Activated T-helper 1 cell treated with anti-CD3 and anti-CD28 coated beads, Interleukin-12 subunit alpha, Interleukin-12 subunit beta, Interleukin-2, Interleukin-4 antibody, amounts not matched to agents 30 ng/mL and 10 ng/mL and 1 ng/mL, durations not matched to agents 14 hours and 24 hours and 36 hours (primary cell): ENCODE measurements at regions of chr1 and their contacts with region 1.

Region 1: DNA sequence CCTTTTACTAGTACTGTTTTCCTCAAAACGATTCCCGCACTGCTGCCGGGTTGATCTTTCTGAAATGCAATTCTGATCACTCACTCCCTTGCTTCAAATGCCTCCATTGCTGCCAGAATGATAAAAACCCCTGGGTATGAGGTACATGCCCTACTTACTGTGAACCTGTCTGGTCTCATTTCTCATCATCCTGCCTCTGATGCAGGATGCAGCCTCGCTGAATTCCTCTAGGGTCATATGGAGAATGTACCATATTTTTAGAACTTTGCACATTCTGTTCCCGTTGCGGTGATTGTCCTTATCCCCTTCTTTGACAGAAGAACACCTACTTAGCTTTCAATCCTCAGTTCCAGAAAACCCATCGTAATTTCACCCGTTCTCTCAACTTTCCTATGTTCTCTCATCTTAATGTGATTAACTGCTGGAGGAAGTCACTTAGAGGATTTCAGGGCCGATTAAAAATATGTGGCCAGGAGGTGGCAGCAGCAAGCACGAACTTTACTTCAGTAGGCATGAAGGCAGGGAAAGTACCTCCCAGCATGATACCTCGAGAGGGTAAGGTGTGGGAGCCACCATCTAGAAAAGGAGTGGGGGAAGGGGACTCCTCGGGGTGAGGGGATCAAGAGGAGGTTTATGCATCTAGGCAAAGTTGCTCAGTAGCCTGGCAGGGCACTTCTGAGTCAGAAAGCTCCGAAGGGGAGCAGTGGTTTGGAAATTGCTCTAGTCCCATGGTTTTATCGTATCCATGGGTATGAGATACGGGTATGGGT is 361.5 kb upstream of the ZP4 start:
- DNase-seq: no peak
- H3K4me3 Mint-ChIP-seq: no peak overlapping the region
- H3K27ac Mint-ChIP-seq: no peak overlapping the region
- H3K4me1 Mint-ChIP-seq: no peaks in the 10 kb centered on the region
- H3K27me3 Mint-ChIP-seq: no peaks in the 10 kb centered on the region

Region 2: GRCh38 chr1:238457610-238458009 is 205.4 kb after region 1 on chr1:
- intact Hi-C with region 1: no loop called
- DNase-seq: no peak
- H3K4me3 Mint-ChIP-seq: no peak overlapping the region
- H3K27ac Mint-ChIP-seq: no peak overlapping the region
- H3K4me1 Mint-ChIP-seq: no peaks in the 10 kb centered on the region
- H3K27me3 Mint-ChIP-seq: no peaks in the 10 kb centered on the region

Region 3: DNA sequence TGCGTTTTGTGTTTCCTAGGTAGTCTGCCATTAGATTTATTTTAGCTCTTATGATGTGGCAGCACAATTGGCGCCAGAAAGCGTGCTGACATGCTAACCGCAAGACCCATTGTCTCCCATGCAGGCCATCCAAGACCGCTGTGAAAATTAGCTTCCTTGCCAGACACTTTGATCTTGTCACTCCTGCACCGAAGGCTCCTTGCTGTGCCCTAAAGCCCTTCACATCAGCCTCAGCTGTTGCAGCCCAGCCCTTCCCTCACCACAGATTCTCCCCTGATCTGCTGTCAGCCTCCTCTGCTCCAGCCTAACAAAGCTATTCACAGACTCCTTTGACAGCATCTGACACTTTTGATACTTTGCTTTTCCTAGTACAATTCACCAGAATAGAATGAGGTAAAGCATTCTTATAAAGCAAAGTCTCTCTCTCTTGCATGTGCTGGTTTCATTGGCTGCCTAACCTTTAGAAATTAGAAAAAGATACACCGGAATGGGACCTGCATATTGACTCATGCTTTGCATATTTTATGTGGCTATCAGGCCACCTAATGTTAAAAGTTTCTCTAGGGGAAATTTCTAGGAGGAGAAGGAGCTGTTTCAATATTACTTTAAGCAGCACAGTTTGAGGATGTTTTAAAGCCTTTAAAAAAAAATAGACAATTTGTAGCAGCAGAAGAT is 1559.1 kb after region 1 on chr1:
- intact Hi-C with region 1: no loop called
- DNase-seq: no peak
- H3K4me3 Mint-ChIP-seq: no peak overlapping the region
- H3K27ac Mint-ChIP-seq: peak overlapping the region; percentile 24
- H3K4me1 Mint-ChIP-seq: peaks cover 16% of the 10 kb centered on the region
- H3K27me3 Mint-ChIP-seq: peaks cover 1% of the 10 kb centered on the region

Region 4: GRCh38 chr1:239976130-239976968 is 1724.1 kb after region 1 on chr1:
- intact Hi-C with region 1: loop called (anchors 5 kb)
- DNase-seq: peak; percentile 9
- H3K4me3 Mint-ChIP-seq: no peak overlapping the region
- H3K27ac Mint-ChIP-seq: no peak overlapping the region
- H3K4me1 Mint-ChIP-seq: no peaks in the 10 kb centered on the region
- H3K27me3 Mint-ChIP-seq: no peaks in the 10 kb centered on the region